ENCODE measurements at regions of chr1 and their contacts with region 1.

Region 1: DNA sequence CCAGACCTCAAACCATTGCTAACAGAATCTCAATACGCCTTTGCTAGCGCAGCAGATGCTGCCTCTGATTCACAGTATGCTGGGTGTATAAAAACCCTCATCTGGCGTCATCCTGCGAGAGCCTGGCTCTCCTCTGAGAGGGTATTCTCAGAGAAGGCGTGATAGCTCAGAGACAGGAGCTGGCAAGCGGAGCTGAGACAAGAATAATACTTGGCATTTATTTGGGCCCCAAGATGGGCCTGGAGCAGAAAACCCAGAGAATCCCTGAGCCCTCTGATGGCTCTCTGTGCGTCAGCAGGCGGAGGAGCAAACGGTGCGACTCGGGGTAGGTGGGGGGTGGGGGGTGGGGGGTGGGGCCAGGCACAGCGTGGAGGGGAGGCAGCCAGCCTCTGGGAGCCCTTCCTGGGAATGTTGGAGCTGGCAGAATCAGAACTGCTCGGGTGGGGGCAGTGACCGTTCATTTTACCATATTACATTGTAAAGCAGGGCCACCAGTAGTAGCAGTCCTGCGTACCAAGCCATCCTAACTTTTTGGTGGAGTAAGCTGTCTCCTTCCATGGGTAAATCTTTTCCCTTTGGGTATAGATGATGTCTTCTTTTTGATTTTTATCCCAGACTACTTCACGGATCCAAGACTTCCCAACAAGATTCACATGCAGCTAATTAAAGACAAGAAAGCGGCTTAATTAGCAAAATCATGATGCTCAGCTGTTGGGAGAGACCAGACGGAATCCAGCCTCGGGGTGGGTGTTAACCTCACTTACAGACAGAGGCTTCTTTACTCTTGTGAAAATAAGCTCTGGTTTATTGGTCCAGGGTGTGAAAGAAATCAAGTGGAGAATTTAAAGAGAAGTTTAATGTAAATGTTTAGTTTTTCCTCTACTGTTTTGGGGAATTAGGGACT is 7.1 kb downstream of the RIIAD1 start:
- DNase-seq: no peak
- H3K4me3 Mint-ChIP-seq: no peak overlapping the region
- H3K27ac Mint-ChIP-seq: no peak overlapping the region
- H3K4me1 Mint-ChIP-seq: no peaks in the 10 kb centered on the region
- H3K27me3 Mint-ChIP-seq: peaks cover 43% of the 10 kb centered on the region

Region 2: GRCh38 chr1:151534665-151535278 is 193.6 kb before region 1 on chr1:
- CTCF ChIA-PET with region 1: interaction called, 11 read pairs
- POLR2A ChIA-PET with region 1: no interaction called
- DNase-seq: peak; percentile 83
- H3K4me3 Mint-ChIP-seq: no peak overlapping the region
- H3K27ac Mint-ChIP-seq: no peak overlapping the region
- H3K4me1 Mint-ChIP-seq: peaks cover 6% of the 10 kb centered on the region
- H3K27me3 Mint-ChIP-seq: no peaks in the 10 kb centered on the region

Region 3: DNA sequence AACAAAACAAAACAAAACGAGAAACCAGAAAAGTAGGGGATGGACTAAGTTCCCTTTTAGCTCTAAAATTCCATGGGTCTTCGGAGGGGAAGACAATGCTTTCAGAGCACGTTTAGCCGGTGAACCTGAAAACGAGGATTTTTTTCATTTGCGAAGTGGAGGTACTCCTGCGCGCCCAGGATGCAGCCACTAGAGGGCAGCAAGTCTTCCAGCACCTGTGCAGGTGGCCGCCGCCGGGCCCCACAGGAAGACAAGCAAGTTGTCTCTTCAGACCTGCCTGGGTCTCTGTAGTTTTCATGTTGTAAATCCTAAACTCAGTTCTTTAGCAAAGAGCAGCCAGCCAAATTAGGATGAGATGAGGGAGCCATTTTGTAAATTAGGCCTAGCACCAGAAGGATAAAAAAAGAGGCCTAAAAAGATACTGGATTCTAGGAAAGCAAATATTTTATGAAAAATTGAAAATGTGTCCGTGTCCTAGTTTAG is 134.2 kb before region 1 on chr1:
- CTCF ChIA-PET with region 1: interaction called, 17 read pairs
- POLR2A ChIA-PET with region 1: no interaction called
- DNase-seq: peak; percentile 87
- H3K4me3 Mint-ChIP-seq: no peak overlapping the region
- H3K27ac Mint-ChIP-seq: peak overlapping the region; percentile 16
- H3K4me1 Mint-ChIP-seq: peaks cover 9% of the 10 kb centered on the region
- H3K27me3 Mint-ChIP-seq: peaks cover 20% of the 10 kb centered on the region

Region 4: GRCh38 chr1:151661751-151662150 is 66.7 kb before region 1 on chr1:
- CTCF ChIA-PET with region 1: no interaction called
- POLR2A ChIA-PET with region 1: no interaction called
- DNase-seq: no peak
- H3K4me3 Mint-ChIP-seq: no peak overlapping the region
- H3K27ac Mint-ChIP-seq: peak overlapping the region; percentile 63
- H3K4me1 Mint-ChIP-seq: peaks cover 12% of the 10 kb centered on the region
- H3K27me3 Mint-ChIP-seq: no peaks in the 10 kb centered on the region

Region 5: DNA sequence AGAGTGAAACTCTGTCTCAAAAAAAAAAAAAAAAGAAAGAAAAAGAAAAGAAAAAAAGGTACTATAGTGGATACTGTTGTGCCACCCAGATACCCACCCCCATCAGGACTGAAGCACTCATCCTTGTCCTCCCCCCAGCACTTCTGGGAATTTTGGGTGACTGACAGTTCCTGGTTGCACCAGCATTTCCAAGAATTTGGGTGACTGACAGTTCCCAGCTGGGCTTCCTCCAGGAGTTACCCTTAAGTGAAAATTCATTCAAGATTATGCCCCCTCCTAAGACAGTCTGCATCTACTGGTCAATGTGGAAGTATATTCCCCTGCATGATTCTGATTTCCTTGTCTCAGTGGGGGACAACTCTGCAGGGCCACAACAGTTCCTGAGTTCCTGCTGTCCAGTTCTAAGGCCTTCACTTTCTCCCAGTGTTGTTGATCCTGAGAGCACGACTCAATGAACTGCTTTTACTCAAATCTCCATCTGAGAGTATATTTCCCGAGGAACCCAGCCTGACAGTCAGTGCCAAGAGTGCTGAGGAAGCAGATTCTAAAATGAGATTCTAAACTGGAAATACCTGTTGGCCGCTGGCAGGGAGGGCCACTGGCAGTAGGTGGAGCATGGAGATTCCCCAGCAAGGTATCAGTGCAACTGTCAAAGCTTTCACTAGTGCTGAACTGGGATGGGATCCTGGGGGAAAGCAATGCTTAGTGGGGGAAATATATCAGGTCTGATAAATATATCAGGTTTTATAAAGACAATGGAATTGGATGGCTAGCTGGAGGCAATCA is 11.4 kb after region 1 on chr1:
- CTCF ChIA-PET with region 1: interaction called, 10 read pairs
- POLR2A ChIA-PET with region 1: no interaction called
- DNase-seq: no peak
- H3K4me3 Mint-ChIP-seq: no peak overlapping the region
- H3K27ac Mint-ChIP-seq: no peak overlapping the region
- H3K4me1 Mint-ChIP-seq: peaks cover 7% of the 10 kb centered on the region
- H3K27me3 Mint-ChIP-seq: peaks cover 12% of the 10 kb centered on the region

Measured in activated CD4-positive, alpha-beta memory T cell treated with anti-CD3 and anti-CD28 coated beads, Interleukin-2, amount 10 ng/mL, durations not matched to agents 7 days and 5 days (primary cell).